Testis (tissue), 5 donors: ENCODE measurements at regions of chr7 and their contacts with region 1.

Region 1: DNA sequence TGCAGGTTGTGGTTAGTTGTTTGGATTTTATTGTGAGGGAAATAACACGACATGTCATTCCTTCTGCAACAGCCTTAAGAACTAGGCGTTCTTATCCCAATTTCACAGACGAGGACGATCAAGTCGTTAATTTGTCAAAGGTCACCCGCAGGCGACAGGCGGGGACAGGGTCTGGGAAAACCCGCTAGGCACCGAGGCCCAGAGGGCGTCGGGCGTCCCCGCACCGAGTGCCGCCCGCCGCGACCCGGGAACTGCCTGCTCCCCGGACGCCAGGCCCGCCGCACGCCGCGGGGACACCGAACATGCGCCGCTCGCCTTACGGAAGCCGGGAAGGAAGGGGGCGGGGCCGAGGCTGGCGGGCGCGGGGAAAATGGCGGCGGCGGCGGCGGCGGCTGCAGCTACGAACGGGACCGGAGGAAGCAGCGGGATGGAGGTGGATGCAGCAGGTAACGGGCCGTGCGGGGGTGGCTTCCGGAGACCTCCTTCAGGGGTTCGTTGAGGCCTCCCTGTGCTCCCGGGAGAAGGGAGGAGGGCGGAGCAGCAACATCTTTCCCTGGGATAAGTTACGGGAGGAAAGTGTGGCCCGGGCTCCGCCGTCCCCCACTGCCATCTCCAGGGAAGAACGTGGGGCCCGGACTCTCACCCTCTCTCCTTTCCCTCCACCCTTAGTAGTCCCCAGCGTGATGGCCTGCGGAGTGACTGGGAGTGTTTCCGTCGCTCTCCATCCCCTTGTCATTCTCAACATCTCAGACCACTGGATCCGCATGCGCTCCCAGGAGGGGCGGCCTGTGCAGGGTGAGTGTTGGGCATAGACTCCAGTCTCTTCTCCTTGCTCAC is at the start of gene COPS6:
- DNase-seq: peak; percentile 84
- H3K4me3 ChIP-seq: peak within 1 kb of the TSS; percentile 74 to 91
- H3K27ac ChIP-seq: peak within 1 kb of the TSS; percentile 84 to 87
- H3K4me1 ChIP-seq: peaks cover 27% of the 10 kb centered on the region
- H3K27me3 ChIP-seq: no peaks in the 10 kb centered on the region
- CTCF ChIP-seq: peak in 1 of 3 experiments; percentile 41
- POLR2A ChIP-seq: peak; percentile 71
- total RNA-seq, gene COPS6: 88.1 to 99.5 TPM

Region 2: GRCh38 chr7:99772565-99772964 is 316.3 kb before region 1 on chr7:
- intact Hi-C with region 1: no loop called
- DNase-seq: no peak
- H3K4me3 ChIP-seq: no peak overlapping the region
- H3K27ac ChIP-seq: no peak overlapping the region
- H3K4me1 ChIP-seq: no peaks in the 10 kb centered on the region
- H3K27me3 ChIP-seq: no peaks in the 10 kb centered on the region
- CTCF ChIP-seq: no peak
- POLR2A ChIP-seq: no peak

Region 3: DNA sequence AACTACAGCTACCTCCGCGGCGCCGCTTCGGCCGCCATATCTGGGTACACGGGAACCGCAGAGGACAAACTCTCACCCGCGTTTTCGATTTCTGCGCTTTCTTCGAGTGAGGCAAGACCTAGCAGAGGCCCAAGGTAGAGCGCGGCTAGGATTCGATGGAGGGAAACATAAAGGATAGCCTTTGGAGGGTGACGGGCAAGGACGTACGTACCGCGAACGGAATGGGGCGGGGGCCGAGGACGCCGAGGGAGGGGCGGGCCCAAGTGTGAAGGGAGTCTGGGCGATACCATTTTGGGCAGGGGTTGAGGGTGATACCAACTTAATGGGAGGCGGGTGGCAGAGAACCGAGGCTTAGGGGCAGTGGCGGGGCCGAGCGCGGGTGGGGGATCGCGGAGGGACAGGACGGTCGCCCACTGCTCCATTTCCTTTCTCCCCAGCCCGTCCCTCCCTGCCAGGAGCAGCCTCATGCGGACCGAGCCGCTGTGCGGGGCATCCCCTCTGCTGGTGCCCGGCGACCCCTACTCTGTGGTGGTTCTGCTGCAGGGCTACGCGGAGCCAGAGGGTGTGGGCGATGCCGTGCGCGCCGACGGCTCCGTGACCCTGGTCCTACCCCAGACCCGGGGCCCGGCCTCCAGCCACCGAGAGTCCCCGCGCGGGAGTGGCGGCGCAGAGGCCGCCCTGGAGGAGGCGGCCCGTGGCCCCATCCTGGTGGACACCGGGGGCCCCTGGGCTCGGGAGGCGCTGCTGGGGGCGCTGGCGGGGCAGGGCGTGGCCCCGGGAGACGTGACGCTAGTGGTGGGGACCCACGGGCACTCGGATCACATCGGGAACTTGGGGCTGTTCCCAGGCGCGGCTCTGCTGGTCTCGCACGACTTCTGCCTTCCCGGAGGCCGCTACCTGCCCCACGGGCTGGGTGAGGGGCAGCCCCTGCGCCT is 38.4 kb after region 1 on chr7 and contains the start of gene MBLAC1:
- intact Hi-C with region 1: loop called (anchors 5 kb)
- DNase-seq: peak; percentile 95
- H3K4me3 ChIP-seq: peak within 1 kb of the TSS; percentile 68 to 75
- H3K27ac ChIP-seq: peak within 1 kb of the TSS; percentile 87 to 97
- H3K4me1 ChIP-seq: peaks cover 13% of the 10 kb centered on the region
- H3K27me3 ChIP-seq: no peaks in the 10 kb centered on the region
- CTCF ChIP-seq: no peak
- POLR2A ChIP-seq: no peak
- total RNA-seq, gene MBLAC1: 7.2 to 10.2 TPM